MCF 10A (cell line): ENCODE measurements at regions of chr12 and their contacts with region 1.

Region 1: DNA sequence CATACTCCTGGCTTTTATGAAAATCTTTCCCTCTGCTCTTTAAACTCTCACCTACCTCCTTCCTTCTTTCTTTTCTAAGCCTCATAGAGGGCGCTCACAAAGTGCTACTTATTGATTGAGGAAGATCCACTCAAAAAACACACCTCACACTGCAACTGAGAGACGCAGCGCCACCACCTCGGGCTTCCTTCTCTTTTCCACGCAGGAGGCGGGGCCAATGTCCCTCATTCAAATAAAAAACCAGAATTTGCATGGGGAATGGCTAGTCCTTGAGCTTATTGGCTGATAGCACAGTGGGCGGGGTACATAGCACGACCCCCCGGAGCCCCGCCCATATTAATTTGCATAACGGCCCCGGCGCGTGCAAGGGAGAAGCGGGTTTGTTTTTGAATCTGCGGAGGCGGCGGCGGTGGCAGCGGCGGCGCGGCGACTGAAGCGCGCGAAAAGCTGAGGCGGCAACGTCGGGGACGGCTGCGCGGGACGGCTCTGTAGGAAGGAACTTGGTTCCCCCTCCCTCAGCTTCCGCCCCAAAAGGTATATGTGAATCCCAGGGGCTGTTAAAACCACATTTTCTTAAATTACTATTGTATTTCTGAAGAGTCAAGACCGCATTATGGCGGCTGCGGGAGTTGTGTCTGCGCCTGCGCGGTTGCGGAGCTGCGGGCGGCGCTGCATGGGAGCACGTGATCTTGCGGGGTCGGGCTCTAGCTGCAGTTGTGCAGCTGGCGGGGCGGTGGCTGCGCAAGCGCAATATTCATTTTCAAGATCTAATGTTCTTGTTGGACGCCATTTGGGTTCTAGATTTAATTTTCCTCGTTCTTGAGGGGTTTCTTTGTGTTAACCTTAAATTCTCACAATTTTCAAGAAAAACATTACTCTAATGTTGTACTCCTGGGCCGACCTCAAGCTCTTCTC is at the start of gene ATF7IP:
- DNase-seq: peak; percentile 96
- H3K4me3 Mint-ChIP-seq: peak within 1 kb of the TSS; percentile 69
- H3K27ac Mint-ChIP-seq: peak within 1 kb of the TSS; percentile 69
- H3K4me1 Mint-ChIP-seq: no peaks in the 10 kb centered on the region
- H3K27me3 Mint-ChIP-seq: no peaks in the 10 kb centered on the region
- CTCF ChIP-seq: no peak
- total RNA-seq, gene ATF7IP: 29.4 and 33.1 TPM in 2 replicates

Region 2: DNA sequence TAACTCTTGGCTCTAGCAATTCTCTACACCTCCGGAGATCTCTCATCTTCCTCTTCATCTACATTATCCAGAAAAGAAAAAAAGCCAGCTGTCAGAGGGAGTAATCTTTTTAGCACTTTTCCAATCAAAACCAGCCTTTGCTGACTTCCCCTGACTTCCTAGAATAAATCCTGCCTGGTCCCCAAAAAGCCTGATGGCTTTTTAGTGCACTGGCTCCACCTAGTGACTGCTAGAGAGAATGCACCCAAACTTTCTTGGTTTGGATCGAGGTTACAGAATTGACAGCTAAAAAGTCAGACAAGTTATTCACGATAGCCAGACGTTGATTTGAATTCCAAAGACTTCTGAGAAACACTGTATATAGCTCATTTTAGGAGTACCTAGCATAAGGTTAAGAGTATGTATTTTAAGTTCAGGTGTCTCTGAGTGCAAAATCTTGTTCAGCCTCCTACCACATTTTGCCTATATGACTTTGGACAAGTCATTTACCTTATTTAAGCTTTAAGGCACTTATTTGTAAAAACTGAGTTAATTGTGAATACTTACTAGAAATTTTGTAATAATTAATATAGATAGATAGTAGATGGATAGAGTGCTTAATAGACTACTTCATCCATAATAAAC is 198.4 kb before region 1 on chr12:
- CTCF ChIA-PET with region 1: no interaction called
- POLR2A ChIA-PET with region 1: no interaction called
- intact Hi-C with region 1: no loop called
- DNase-seq: peak; percentile 68
- H3K4me3 Mint-ChIP-seq: no peak overlapping the region
- H3K27ac Mint-ChIP-seq: no peak overlapping the region
- H3K4me1 Mint-ChIP-seq: no peaks in the 10 kb centered on the region
- H3K27me3 Mint-ChIP-seq: peaks cover 9% of the 10 kb centered on the region
- CTCF ChIP-seq: peak; percentile 95

Region 3: GRCh38 chr12:14185427-14186192 is 179.9 kb before region 1 on chr12:
- CTCF ChIA-PET with region 1: interaction called, 5 read pairs
- POLR2A ChIA-PET with region 1: no interaction called
- intact Hi-C with region 1: loop called (anchors 1 kb)
- DNase-seq: peak; percentile 61
- H3K4me3 Mint-ChIP-seq: no peak overlapping the region
- H3K27ac Mint-ChIP-seq: no peak overlapping the region
- H3K4me1 Mint-ChIP-seq: no peaks in the 10 kb centered on the region
- H3K27me3 Mint-ChIP-seq: peaks cover 20% of the 10 kb centered on the region
- CTCF ChIP-seq: peak; percentile 76

Region 4: DNA sequence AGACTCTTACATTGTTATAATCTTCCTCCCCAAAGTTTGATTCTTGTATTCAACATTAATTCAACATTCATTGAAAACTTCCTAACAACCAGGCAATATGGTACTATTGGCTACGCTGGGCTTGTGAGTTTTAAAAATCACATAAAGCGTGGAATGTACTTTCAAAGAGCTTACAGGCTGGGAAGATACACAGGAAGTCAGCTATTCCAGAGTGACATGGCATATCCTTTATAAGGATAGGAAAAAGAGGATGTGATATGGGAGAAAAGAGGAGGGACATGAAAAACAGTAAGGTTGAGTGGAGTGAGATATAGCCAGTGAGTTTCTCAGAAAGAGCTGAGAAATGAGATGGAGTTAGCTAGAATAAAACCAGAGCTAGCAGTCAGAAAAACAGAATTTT is 103.7 kb before region 1 on chr12:
- CTCF ChIA-PET with region 1: interaction called, 7 read pairs
- POLR2A ChIA-PET with region 1: interaction called, 17 read pairs
- intact Hi-C with region 1: loop called (anchors 1 kb)
- DNase-seq: no peak
- H3K4me3 Mint-ChIP-seq: no peak overlapping the region
- H3K27ac Mint-ChIP-seq: no peak overlapping the region
- H3K4me1 Mint-ChIP-seq: peaks cover 17% of the 10 kb centered on the region
- H3K27me3 Mint-ChIP-seq: no peaks in the 10 kb centered on the region
- CTCF ChIP-seq: no peak

Region 5: GRCh38 chr12:14384783-14385638 is 19.5 kb after region 1 on chr12:
- CTCF ChIA-PET with region 1: interaction called, 8 read pairs
- POLR2A ChIA-PET with region 1: interaction called, 93 read pairs
- intact Hi-C with region 1: no loop called
- DNase-seq: peak; percentile 89
- H3K4me3 Mint-ChIP-seq: peak overlapping the region; percentile 57
- H3K27ac Mint-ChIP-seq: peak overlapping the region; percentile 92
- H3K4me1 Mint-ChIP-seq: peaks cover 6% of the 10 kb centered on the region
- H3K27me3 Mint-ChIP-seq: no peaks in the 10 kb centered on the region
- CTCF ChIP-seq: no peak

Region 6: GRCh38 chr12:14417715-14418114 is 52.2 kb after region 1 on chr12:
- CTCF ChIA-PET with region 1: interaction called, 5 read pairs
- POLR2A ChIA-PET with region 1: interaction called, 23 read pairs
- intact Hi-C with region 1: loop called (anchors 5 kb)
- DNase-seq: peak; percentile 65
- H3K4me3 Mint-ChIP-seq: no peak overlapping the region
- H3K27ac Mint-ChIP-seq: peak overlapping the region; percentile 59
- H3K4me1 Mint-ChIP-seq: no peaks in the 10 kb centered on the region
- H3K27me3 Mint-ChIP-seq: no peaks in the 10 kb centered on the region
- CTCF ChIP-seq: no peak

Region 7: DNA sequence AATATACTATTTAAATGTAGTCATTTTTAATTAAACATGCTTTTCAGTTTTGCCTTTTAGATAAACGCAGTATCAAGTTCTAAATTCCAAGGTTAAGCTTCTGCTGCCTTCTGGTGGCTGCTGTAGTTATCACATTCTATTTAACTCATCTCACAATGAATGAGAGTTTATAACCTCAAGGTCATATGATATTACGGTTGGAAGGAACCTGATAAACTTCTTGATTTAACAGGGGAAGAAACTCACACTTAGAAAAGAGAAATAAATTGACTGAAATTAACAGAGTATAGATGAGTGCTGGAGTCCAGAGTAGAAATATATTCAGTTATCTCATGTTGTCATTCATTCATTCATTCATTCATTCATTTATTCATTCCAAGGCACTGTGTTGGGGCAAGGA is 299.0 kb after region 1 on chr12:
- CTCF ChIA-PET with region 1: no interaction called
- POLR2A ChIA-PET with region 1: no interaction called
- intact Hi-C with region 1: loop called (anchors 5 kb)
- DNase-seq: peak; percentile 53
- H3K4me3 Mint-ChIP-seq: no peak overlapping the region
- H3K27ac Mint-ChIP-seq: no peak overlapping the region
- H3K4me1 Mint-ChIP-seq: peaks cover 5% of the 10 kb centered on the region
- H3K27me3 Mint-ChIP-seq: no peaks in the 10 kb centered on the region
- CTCF ChIP-seq: peak; percentile 58